CD8-positive, alpha-beta T cell (primary cell): ENCODE measurements at regions of chrX and their contacts with region 1.

Region 1: GRCh38 chrX:118345401-118346257 is at the start of gene WDR44:
- DNase-seq: peak; percentile 86 to 96 (median 90)
- ATAC-seq: peak; percentile 90
- H3K4me3 ChIP-seq: peak within 1 kb of the TSS; percentile 70 to 87
- H3K4me3 Mint-ChIP-seq: peak within 1 kb of the TSS; percentile 98
- H3K27ac ChIP-seq: peak within 1 kb of the TSS; percentile 87 to 89
- H3K27ac Mint-ChIP-seq: peak within 1 kb of the TSS; percentile 97
- H3K4me1 ChIP-seq: peaks cover 26% of the 10 kb centered on the region
- H3K4me1 Mint-ChIP-seq: peaks cover 34% of the 10 kb centered on the region
- H3K27me3 ChIP-seq: no peaks in the 10 kb centered on the region
- H3K27me3 Mint-ChIP-seq: no peaks in the 10 kb centered on the region
- CTCF ChIP-seq: no peak
- total RNA-seq, gene WDR44: 9.9 to 11.2 TPM

Region 2: GRCh38 chrX:118116713-118117550 is 228.7 kb before region 1 on chrX and contains the start of gene KLHL13:
- CTCF ChIA-PET with region 1: no interaction called
- POLR2A ChIA-PET with region 1: no interaction called
- intact Hi-C with region 1: loop called in 1 of 2 experiments (anchors 10 kb)
- DNase-seq: peak in 5 of 9 experiments; percentile 9 to 46 (median 22)
- ATAC-seq: peak; percentile 38
- H3K4me3 ChIP-seq: peak within 1 kb of the TSS; percentile 52 to 55
- H3K4me3 Mint-ChIP-seq: peak within 1 kb of the TSS; percentile 79
- H3K27ac ChIP-seq: no peak within 1 kb of the TSS
- H3K27ac Mint-ChIP-seq: peak within 1 kb of the TSS; percentile 78
- H3K4me1 ChIP-seq: no peaks in the 10 kb centered on the region
- H3K4me1 Mint-ChIP-seq: peaks cover 17% of the 10 kb centered on the region
- H3K27me3 ChIP-seq: no peaks in the 10 kb centered on the region
- H3K27me3 Mint-ChIP-seq: peaks cover 2% of the 10 kb centered on the region
- CTCF ChIP-seq: no peak
- total RNA-seq, gene KLHL13: 0.50 to 0.54 TPM

Region 3: DNA sequence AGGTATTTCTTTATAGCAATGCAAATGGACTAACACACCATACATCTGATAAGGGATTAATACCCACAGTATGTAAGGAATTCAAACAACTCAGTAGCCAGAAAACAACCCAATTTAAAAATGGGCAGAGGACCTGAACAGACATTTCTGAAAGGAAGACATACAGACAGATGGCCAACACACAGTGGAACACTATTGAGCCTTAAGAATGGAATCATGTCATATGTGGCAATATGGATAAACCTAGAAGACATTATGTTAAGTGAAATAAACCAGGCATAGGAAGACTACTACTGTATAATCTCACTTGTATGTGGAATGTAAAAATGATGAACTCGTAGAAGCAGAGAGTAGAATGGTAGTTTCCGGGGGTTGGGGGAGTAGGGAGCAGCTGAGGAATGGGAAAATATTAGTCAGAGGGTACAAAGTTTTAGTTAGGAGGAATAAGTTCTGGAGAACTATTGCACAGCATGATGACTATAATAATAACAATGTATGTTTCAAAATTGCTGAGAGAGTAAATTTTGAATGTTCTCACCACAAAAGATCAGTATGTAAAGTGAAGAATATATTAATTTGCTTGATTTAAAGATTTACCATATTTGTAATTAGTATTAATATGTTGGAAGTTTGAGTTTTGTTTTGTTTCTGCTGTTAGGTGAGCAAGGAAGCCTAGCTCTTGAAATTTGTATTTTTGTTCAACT is 25.4 kb after region 1 on chrX:
- CTCF ChIA-PET with region 1: no interaction called
- POLR2A ChIA-PET with region 1: no interaction called
- intact Hi-C with region 1: no loop called
- DNase-seq: no peak
- ATAC-seq: no peak
- H3K4me3 ChIP-seq: no peak overlapping the region
- H3K4me3 Mint-ChIP-seq: no peak overlapping the region
- H3K27ac ChIP-seq: no peak overlapping the region
- H3K27ac Mint-ChIP-seq: peak overlapping the region; percentile 52
- H3K4me1 ChIP-seq: no peaks in the 10 kb centered on the region
- H3K4me1 Mint-ChIP-seq: peaks cover 9% of the 10 kb centered on the region
- H3K27me3 ChIP-seq: no peaks in the 10 kb centered on the region
- H3K27me3 Mint-ChIP-seq: no peaks in the 10 kb centered on the region
- CTCF ChIP-seq: no peak

Region 4: DNA sequence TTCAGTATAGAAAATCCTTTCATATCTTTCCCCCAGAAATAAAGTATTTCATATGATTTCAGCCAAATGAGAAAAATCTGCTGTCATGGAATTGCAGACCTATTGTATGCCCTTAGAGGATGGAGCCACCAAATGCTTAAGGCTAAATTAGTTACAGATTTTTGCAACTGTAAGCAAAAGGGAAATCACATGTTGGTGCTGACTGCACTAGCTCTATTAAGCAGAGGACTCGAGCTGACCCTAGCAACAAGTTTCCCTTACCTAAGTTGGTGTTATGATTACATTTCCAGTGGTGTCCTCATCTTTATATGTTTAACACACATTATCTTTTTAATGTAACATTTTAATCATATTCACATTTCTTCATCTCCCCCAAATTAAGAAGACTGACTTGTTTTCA is 91.7 kb after region 1 on chrX:
- CTCF ChIA-PET with region 1: no interaction called
- POLR2A ChIA-PET with region 1: no interaction called
- intact Hi-C with region 1: loop called in 1 of 2 experiments (anchors 5 kb)
- DNase-seq: no peak
- ATAC-seq: no peak
- H3K4me3 ChIP-seq: no peak overlapping the region
- H3K4me3 Mint-ChIP-seq: no peak overlapping the region
- H3K27ac ChIP-seq: no peak overlapping the region
- H3K27ac Mint-ChIP-seq: no peak overlapping the region
- H3K4me1 ChIP-seq: no peaks in the 10 kb centered on the region
- H3K4me1 Mint-ChIP-seq: no peaks in the 10 kb centered on the region
- H3K27me3 ChIP-seq: no peaks in the 10 kb centered on the region
- H3K27me3 Mint-ChIP-seq: no peaks in the 10 kb centered on the region
- CTCF ChIP-seq: no peak

Region 5: GRCh38 chrX:118495061-118495921 is 149.7 kb after region 1 on chrX and contains the start of gene DOCK11:
- CTCF ChIA-PET with region 1: no interaction called
- POLR2A ChIA-PET with region 1: no interaction called
- intact Hi-C with region 1: loop called in 1 of 2 experiments (anchors 2 kb)
- DNase-seq: peak; percentile 48 to 92 (median 80)
- ATAC-seq: peak; percentile 69
- H3K4me3 ChIP-seq: peak within 1 kb of the TSS; percentile 71 to 75
- H3K4me3 Mint-ChIP-seq: peak within 1 kb of the TSS; percentile 98
- H3K27ac ChIP-seq: peak within 1 kb of the TSS; percentile 82
- H3K27ac Mint-ChIP-seq: peak within 1 kb of the TSS; percentile 99
- H3K4me1 ChIP-seq: peaks cover 31% of the 10 kb centered on the region
- H3K4me1 Mint-ChIP-seq: peaks cover 26% of the 10 kb centered on the region
- H3K27me3 ChIP-seq: no peaks in the 10 kb centered on the region
- H3K27me3 Mint-ChIP-seq: no peaks in the 10 kb centered on the region
- CTCF ChIP-seq: no peak
- total RNA-seq, gene DOCK11: 52.8 to 57.9 TPM

Region 6: GRCh38 chrX:118520216-118521206 is 174.9 kb after region 1 on chrX:
- CTCF ChIA-PET with region 1: no interaction called
- POLR2A ChIA-PET with region 1: no interaction called
- intact Hi-C with region 1: no loop called
- DNase-seq: no peak
- ATAC-seq: no peak
- H3K4me3 ChIP-seq: no peak overlapping the region
- H3K4me3 Mint-ChIP-seq: no peak overlapping the region
- H3K27ac ChIP-seq: peak overlapping the region in 1 of 2 experiments; percentile 30
- H3K27ac Mint-ChIP-seq: peak overlapping the region; percentile 79
- H3K4me1 ChIP-seq: peaks cover 63% of the 10 kb centered on the region
- H3K4me1 Mint-ChIP-seq: peaks cover 69% of the 10 kb centered on the region
- H3K27me3 ChIP-seq: no peaks in the 10 kb centered on the region
- H3K27me3 Mint-ChIP-seq: no peaks in the 10 kb centered on the region
- CTCF ChIP-seq: no peak